ENCODE measurements at regions of chr21 and their contacts with region 1.

Region 1: DNA sequence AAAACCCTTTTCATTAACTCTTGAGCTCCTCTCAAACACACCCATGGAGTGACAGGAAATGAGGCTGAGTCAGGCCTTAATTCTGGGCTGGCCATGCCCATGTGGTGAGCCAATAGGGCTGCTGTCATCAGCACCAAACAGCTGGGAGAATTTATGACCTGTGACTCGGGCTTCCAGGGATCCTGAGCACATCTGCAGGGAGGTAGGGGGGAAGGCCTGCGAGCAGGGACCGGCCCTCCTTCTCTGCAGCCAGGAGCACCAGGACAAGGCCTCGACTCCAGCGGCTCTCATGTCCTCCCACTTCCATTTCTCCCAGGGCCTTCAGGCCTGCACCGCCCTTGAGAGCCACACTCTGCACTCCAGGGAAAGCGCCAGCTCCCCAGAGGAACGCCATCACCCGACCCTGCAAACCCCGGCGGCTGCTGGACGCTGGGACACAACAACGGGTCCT is 14.6 kb downstream of the RIPK4 start:
- DNase-seq: no peak
- H3K4me3 ChIP-seq: no peak overlapping the region
- H3K27ac ChIP-seq: no peak overlapping the region
- H3K27me3 ChIP-seq: peaks cover 0 to 15% (median 0%) of the 10 kb centered on the region in 45 donors
- CTCF ChIP-seq: no peak

Region 2: GRCh38 chr21:41663801-41664788 is 88.2 kb before region 1 on chr21:
- intact Hi-C with region 1: loop called in 1 of 2 experiments (anchors 10 kb)
- DNase-seq: no peak
- H3K4me3 ChIP-seq: no peak overlapping the region
- H3K27ac ChIP-seq: no peak overlapping the region
- H3K27me3 ChIP-seq: peaks cover 0 to 11% (median 0%) of the 10 kb centered on the region in 45 donors
- CTCF ChIP-seq: no peak

Measured in dorsolateral prefrontal cortex (tissue), 120 donors.